ENCODE measurements at regions of chr4 and their contacts with region 1.

Region 1: DNA sequence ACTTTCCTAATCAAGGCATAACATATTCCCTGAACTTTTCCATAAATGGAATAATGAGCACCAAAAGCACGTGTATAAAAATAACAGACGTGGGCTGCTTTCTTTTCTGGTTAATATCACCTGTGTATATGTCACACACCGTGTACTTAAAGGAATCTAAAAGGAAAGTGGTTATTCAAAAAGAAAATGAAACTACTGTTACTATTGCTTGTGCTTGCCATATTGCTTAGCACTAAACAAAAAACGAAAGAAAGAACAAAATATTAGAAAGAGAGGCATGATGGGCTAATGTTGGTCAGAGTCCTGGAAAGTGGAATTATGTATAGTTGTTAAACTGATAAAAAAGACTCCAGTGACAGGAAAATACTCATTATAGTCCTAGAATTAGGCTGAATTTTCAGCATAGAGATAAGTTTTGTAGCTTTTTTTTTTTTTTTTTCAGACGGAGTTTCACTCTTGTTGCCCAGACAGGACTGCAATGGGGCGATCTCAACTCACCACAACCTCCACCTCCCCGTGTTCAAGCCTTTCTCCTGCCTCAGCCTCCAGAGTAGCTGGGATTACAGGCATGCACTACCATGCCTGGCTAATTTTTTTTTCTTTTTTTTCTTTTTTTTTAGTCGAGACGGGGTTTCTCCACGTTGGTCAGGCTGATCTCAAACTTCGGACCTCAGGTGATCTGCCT is 123.2 kb downstream of the PABPC4L start:
- DNase-seq: no peak

Region 2: DNA sequence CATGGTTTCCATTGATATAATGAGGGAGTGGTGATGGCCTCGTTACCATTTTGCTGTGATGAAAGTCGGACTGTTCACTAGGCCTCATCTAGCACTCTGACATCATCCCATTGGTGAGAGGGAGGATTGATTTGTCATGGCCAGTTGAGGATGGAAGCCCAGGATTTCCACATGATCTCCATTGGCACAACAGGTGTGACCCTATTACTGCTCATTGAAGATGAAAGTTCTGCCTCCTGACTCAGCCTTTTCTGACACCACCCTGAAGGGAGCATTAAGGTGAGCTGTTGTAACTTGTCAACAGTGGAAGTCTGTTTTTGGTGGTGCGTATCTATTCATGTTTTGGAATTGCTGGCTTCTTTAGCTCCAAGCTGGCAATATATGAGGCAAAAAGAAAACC is 21.0 kb before region 1 on chr4:
- intact Hi-C with region 1: loop called in 1 of 2 experiments (anchors 2 kb)
- DNase-seq: no peak

Region 3: DNA sequence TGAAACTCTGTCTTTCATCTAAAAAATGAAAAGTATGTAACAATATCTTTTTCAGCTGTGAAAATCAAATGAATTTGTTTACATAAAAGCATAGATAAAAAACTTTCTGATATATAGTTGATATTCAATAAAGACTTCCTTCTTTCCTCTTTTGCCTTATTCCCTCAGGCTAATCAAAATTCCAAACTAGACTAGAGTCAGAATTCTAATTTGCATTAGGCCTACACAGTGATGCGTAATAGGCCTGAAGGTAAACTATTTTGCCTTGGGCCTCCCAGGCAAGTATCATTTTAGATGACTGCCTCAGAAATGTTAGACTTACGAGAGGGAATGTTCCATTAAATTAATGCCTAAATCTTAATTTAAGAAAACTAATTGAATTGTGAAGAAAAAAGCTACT is 1038.3 kb after region 1 on chr4:
- intact Hi-C with region 1: no loop called
- DNase-seq: no peak